GM18951 (cell line): ENCODE measurements at regions of chr12 and their contacts with region 1.

Region 1: DNA sequence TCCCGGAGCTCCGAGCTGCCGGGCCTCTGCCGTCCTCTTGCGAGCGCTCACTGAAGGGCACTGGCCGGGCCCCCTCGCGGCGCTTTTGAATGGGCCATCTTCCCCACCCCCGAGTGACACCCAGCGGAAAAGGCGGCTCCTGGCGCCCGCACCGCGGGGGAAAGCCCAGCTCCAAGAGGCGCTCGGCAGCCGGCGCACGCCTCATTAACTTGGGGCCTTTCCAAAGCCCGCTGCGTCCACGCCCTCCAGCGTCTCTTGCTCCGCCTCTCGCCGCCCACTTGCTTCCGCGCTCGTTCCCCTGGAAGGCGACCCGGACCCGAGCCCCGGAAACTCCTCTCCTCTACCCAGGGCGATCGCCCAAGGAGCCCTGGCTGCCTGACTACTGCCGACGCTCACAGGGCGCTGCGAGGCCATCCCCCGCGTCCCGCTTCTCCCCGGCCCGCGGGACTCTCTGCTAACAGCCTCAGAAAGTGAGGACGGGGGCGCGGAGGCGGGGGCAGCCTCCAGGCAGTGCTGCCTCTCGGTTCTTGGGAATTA is at the start of gene PHLDA1:
- POLR2A ChIP-seq: peak; percentile 97

Region 2: DNA sequence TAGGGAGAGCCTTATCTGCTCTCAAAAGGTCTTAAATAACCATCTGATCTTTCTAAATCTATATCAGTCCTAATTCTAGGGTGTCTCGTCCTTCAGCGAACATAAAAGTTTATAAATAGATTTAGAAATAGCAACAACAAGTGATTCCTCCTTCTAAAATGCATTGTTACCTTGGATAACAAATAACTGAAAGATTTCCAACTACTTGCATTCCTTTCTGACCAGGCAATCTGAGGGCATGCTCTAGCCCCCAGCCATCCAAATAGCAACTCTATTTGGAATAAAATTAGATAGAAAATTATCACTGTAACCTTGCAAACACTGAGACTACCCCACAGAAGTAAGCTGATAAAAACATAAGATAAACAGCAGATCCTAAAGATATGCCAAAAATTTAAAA is 498.4 kb before region 1 on chr12:
- in situ Hi-C with region 1: loop called (anchors 10 kb)
- POLR2A ChIP-seq: no peak

Region 3: DNA sequence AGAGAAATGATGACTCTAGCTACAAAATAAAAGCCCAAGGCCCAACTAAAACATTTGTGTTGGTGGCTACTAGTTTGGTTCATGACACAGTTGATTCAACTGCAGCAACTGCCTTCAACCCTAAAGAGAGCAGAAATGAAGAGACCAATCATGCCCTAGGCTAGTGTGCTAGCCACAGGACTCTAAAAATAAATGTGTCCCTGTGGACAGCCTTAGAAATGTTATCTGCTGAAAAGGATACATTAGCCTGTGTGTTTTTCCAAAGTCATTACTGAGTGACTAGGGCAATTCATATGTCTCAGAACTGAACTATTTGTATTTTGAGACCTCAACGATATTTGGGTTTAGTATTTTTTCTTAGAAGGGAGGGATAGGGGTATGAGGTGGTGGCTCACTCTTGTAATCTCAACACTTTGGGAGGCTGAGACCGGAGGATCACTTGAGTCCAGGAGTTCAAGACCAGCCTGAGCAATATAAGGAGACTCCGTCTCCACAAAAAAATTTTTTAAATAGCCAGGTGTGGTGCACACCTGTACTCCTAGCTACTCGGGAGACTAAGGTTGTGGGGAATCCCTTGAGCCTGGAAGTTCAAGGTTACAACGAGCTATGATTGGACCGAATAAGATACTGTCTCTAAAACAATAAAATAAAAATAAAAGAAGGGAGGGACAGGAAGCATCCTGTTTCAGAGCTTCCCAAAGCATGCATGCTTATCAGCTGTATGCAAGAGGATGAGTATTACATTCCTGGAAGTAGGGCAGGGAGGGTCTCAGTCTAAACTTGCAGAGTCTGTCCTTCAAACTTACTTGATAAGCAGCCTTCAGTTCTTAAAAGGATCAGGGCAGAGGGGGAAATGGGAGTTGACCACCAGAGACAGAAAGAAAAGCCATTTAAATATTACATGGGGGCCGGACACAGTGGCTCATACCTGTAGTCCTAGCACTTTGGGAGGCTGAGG is 82.5 kb after region 1 on chr12:
- in situ Hi-C with region 1: no loop called
- POLR2A ChIP-seq: no peak